ENCODE measurements at regions of chr2 and their contacts with region 1.

Region 1: DNA sequence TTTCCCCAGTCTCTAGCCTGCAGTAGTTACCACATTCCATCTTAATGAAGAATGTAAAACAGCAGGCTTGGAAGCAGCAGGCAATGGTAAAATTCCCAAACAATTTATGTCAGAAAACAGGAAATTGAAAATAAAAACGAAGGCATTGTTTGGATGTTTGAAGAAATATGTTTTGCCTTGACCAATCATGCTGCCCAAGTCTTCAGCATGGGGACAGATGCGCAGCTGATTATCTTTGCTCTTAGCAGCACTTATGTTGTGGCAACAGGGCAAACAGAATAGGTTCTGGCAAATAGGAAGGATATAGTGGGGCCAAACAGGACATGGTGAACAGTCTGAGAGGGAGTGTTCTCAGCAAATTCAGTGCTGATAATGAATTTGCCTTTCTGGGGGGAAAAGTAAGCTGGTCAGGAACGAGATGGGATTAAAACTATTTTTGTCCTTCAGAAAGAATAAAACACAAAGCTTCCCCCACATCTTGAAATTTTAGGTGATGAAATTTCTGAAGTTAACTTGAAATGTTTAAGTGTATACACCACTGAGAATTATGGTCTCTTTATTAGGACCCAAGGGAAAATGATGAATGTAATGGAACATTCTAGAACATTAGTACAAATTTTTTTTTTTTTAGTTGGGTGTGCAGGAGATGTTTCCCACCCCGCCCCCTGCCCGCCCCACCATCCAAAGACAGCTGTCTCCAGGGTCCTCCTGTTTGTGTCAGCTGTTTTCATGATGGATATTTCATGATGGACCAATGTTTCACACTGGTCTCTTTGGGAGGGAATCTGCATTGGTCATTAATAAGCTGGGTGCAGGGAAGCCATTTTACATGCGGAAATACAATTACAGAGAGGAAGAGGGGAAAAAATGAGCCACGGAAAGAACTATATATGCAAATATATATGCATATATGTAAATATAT is 239.5 kb upstream of the REV1 start:
- DNase-seq: no peak
- H3K4me3 ChIP-seq: no peak overlapping the region
- H3K27ac ChIP-seq: peak overlapping the region in 1 of 2 donors; percentile 30
- H3K4me1 ChIP-seq: no peaks in the 10 kb centered on the region
- H3K27me3 ChIP-seq: no peaks in the 10 kb centered on the region
- CTCF ChIP-seq: no peak
- POLR2A ChIP-seq: no peak

Region 2: DNA sequence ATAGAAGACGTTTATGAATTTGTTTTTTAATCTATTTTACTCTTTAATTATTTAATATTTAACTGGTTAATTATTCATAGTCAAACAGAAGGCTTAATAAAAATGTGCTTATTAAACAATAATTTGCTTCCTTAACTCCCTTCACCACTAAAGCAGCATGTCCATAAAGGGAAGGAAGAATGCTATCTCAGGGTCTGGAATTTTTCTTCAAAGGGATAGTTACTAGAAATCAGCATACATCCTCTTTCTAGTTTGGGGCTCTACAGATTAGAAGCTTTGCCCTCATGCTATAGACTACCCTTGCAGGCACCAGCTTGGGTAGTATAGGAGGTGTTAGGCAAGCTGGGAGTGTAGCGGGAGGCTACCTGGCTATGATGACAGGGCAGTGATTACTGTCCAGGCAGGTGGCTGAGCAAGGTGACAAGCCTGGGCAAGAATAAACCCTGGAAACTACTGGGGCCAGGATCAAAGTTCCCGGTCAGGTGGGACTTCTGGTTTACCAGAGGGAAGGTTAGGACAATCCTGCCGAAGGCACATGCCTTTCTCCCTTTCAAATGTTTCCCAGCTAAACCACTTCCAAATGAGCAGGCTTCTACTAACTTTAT is 36.5 kb after region 1 on chr2:
- intact Hi-C with region 1: loop called (anchors 5 kb)
- DNase-seq: peak in 1 of 2 donors; percentile 26
- H3K4me3 ChIP-seq: no peak overlapping the region
- H3K27ac ChIP-seq: no peak overlapping the region
- H3K4me1 ChIP-seq: no peaks in the 10 kb centered on the region
- H3K27me3 ChIP-seq: no peaks in the 10 kb centered on the region
- CTCF ChIP-seq: no peak
- POLR2A ChIP-seq: no peak

Region 3: DNA sequence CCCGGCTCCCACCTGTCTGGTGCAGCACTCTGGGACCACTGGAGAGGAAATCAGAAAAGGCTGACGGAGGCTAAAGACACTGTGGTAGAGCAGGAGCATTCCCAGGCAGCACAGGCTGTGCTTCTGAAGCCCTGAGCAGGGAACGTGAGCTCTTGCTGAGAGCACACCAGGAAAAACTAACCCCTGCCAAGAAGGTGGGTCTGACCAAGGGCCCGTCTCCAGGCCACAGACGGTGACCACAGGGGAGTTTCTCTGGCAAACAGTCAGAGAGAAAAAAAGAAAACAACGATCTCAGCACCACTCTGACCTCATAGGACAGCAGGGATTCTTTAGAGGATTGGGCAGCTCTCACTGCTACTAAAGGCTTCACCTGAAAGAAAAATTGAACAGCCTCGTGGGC is 211.6 kb after region 1 on chr2:
- intact Hi-C with region 1: no loop called
- DNase-seq: peak in 1 of 2 donors; percentile 36
- H3K4me3 ChIP-seq: no peak overlapping the region
- H3K27ac ChIP-seq: no peak overlapping the region
- H3K4me1 ChIP-seq: peaks cover 0 to 9% of the 10 kb centered on the region in 2 donors
- H3K27me3 ChIP-seq: no peaks in the 10 kb centered on the region
- CTCF ChIP-seq: no peak
- POLR2A ChIP-seq: no peak

Region 4: DNA sequence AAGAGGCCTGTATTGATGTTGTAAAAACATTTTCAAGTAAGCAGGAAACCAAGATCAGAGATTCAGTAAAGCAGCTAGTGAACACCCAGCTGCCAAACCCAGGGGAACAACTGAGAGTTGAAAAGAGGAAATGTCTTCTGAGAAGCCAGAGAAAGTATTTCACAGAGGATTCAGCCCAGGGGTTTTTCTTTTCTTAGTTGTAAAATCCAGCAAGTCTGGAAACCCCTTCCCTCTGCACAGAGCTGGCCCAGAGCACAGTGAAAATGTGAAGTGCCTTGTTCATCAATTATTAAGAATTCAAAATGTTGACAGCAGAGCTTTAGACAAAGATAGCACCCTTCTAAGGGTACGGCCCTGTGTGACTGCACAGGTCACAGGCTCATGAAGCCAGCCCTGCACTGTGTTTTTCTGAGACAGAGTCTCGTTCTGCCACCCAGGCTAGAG is 384.6 kb after region 1 on chr2:
- intact Hi-C with region 1: no loop called
- DNase-seq: no peak
- H3K4me3 ChIP-seq: no peak overlapping the region
- H3K27ac ChIP-seq: no peak overlapping the region
- H3K4me1 ChIP-seq: no peaks in the 10 kb centered on the region
- H3K27me3 ChIP-seq: peaks cover 0 to 3% of the 10 kb centered on the region in 2 donors
- CTCF ChIP-seq: no peak
- POLR2A ChIP-seq: no peak